SK-N-SH (cell line): ENCODE measurements at regions of chr3 and their contacts with region 1.

Region 1: GRCh38 chr3:196979545-196979944 is 10.9 kb upstream of the PIGZ start:
- DNase-seq: no peak
- H3K4me3 ChIP-seq: no peak overlapping the region
- H3K27ac ChIP-seq: no peak overlapping the region
- H3K4me1 ChIP-seq: peaks cover 0 to 2% of the 10 kb centered on the region in 2 experiments; a peak in 1 of 4 replicates
- H3K27me3 ChIP-seq: no peaks in the 10 kb centered on the region
- CTCF ChIP-seq: no peak
- EP300 ChIP-seq: no peak
- RAD21 ChIP-seq: no peak

Region 2: GRCh38 chr3:196989721-196990271 is 10.3 kb after region 1 on chr3:
- CTCF ChIA-PET with region 1: interaction called, 26 read pairs
- POLR2A ChIA-PET with region 1: no interaction called
- DNase-seq: no peak
- H3K4me3 ChIP-seq: no peak overlapping the region
- H3K27ac ChIP-seq: no peak overlapping the region
- H3K4me1 ChIP-seq: peaks cover 0 to 11% of the 10 kb centered on the region in 2 experiments; a peak in 1 of 4 replicates
- H3K27me3 ChIP-seq: no peaks in the 10 kb centered on the region; the same call in 1 of the 2 replicates
- CTCF ChIP-seq: no peak
- EP300 ChIP-seq: no peak
- RAD21 ChIP-seq: no peak

Region 3: DNA sequence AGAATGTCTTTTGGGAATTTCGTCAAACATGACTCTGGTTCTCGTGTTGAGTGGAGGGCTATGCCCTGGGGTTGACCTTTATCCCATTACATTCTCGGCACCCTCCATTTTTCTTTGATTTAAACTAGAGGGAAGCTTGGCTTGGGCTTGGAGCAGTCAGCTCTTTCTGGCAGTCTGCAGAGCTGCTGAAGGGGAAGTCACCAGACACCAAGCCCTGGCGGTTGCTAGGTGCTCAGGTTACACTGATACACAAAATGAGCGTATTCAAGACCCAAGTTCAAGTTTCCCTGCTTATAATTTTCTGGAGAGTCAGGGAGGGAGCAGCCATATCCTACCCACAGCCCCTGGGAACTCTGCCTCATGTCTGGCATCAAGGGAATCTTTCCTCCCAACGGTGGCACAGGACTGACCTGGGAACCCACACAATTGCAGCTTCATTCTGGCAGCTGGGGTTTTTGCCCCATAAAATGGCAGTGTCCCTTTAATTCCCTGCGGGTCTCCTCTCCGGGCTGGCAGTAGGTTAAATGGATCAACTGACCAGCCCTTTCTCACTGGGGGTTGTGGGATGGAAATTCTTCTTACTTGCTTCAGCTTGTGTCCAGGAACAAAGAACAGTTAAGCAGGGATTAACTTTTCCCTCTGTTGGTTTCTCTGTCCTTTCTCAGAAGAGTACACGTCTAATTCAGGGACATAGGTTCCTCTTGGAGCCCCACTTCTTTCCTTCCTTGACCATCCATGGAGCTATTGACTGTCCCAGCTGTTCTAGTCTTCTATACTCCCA is 428.8 kb after region 1 on chr3:
- CTCF ChIA-PET with region 1: no interaction called
- POLR2A ChIA-PET with region 1: no interaction called
- DNase-seq: peak; percentile 1
- H3K4me3 ChIP-seq: no peak overlapping the region
- H3K27ac ChIP-seq: no peak overlapping the region
- H3K4me1 ChIP-seq: peaks cover 0 to 2% of the 10 kb centered on the region in 2 experiments; a peak in 1 of 4 replicates
- H3K27me3 ChIP-seq: no peaks in the 10 kb centered on the region
- CTCF ChIP-seq: no peak
- EP300 ChIP-seq: no peak
- RAD21 ChIP-seq: no peak